PC-9 (cell line): ENCODE measurements at regions of chr2 and their contacts with region 1.

Region 1: GRCh38 chr2:220228299-220229006 is 601.0 kb downstream of the SLC4A3 start:
- DNase-seq: peak; percentile 80 to 97
- H3K4me3 ChIP-seq: peak overlapping the region; percentile 45
- H3K27ac ChIP-seq: peak overlapping the region; percentile 90
- H3K4me1 ChIP-seq: peaks cover 67% of the 10 kb centered on the region
- H3K27me3 ChIP-seq: no peaks in the 10 kb centered on the region
- CTCF ChIP-seq: no peak

Region 2: DNA sequence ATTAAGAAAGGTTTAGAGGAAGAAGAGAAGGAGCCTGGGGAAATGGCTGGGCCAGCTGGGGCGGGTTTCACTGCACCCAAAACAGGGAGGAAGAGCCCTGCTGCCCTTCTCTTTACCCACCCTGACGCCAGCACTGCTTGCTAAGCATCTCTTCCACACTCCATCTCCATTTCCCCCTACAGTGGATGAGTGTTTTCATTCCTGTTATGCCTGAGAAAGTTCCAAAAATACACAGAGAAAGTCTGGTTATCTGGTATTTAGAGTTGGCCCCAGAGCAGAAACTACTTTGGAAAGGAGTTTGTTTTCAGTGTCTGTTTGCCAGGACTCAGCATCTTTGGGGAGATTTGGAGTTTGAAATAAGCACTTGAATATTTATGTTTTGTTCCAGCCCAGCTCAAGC is 150.0 kb before region 1 on chr2:
- CTCF ChIA-PET with region 1: no interaction called
- POLR2A ChIA-PET with region 1: no interaction called
- intact Hi-C with region 1: no loop called
- DNase-seq: no peak
- H3K4me3 ChIP-seq: no peak overlapping the region
- H3K27ac ChIP-seq: no peak overlapping the region
- H3K4me1 ChIP-seq: peaks cover 15% of the 10 kb centered on the region; the same call in 1 of the 2 replicates
- H3K27me3 ChIP-seq: no peaks in the 10 kb centered on the region
- CTCF ChIP-seq: no peak

Region 3: GRCh38 chr2:220143336-220143735 is 85.1 kb before region 1 on chr2:
- CTCF ChIA-PET with region 1: no interaction called
- POLR2A ChIA-PET with region 1: no interaction called
- intact Hi-C with region 1: loop called (anchors 1 kb)
- DNase-seq: peak; percentile 39 to 77
- H3K4me3 ChIP-seq: no peak overlapping the region
- H3K27ac ChIP-seq: peak overlapping the region; percentile 58
- H3K4me1 ChIP-seq: peaks cover 16% of the 10 kb centered on the region
- H3K27me3 ChIP-seq: no peaks in the 10 kb centered on the region
- CTCF ChIP-seq: no peak

Region 4: DNA sequence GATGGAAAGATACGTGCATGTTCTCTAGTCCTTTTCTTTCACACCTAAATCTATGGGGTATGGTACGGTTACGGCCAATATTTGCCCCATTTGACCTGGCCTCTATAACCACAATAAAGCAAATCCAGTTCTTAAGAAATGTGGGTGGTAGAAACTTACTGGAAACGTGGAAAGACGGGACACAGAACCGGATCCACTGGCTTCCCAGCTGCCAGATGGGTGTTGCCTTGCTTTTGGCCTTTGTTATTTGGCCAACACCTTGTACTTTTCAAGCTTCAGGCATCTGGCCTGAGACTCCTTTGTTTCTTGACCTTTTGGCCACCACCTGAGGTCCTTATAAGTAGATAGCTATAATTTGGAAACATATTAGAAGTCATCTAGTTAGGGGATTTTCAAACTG is 34.9 kb after region 1 on chr2:
- CTCF ChIA-PET with region 1: no interaction called
- POLR2A ChIA-PET with region 1: no interaction called
- intact Hi-C with region 1: loop called (anchors 1 kb)
- DNase-seq: peak in 1 of 2 experiments; percentile 37
- H3K4me3 ChIP-seq: no peak overlapping the region
- H3K27ac ChIP-seq: no peak overlapping the region
- H3K4me1 ChIP-seq: no peaks in the 10 kb centered on the region
- H3K27me3 ChIP-seq: no peaks in the 10 kb centered on the region
- CTCF ChIP-seq: no peak

Region 5: GRCh38 chr2:220353897-220354296 is 125.4 kb after region 1 on chr2:
- CTCF ChIA-PET with region 1: interaction called, 3 read pairs
- POLR2A ChIA-PET with region 1: no interaction called
- intact Hi-C with region 1: loop called (anchors 5 kb)
- DNase-seq: no peak
- H3K4me3 ChIP-seq: no peak overlapping the region
- H3K27ac ChIP-seq: no peak overlapping the region
- H3K4me1 ChIP-seq: peaks cover 18% of the 10 kb centered on the region
- H3K27me3 ChIP-seq: no peaks in the 10 kb centered on the region
- CTCF ChIP-seq: no peak

Region 6: DNA sequence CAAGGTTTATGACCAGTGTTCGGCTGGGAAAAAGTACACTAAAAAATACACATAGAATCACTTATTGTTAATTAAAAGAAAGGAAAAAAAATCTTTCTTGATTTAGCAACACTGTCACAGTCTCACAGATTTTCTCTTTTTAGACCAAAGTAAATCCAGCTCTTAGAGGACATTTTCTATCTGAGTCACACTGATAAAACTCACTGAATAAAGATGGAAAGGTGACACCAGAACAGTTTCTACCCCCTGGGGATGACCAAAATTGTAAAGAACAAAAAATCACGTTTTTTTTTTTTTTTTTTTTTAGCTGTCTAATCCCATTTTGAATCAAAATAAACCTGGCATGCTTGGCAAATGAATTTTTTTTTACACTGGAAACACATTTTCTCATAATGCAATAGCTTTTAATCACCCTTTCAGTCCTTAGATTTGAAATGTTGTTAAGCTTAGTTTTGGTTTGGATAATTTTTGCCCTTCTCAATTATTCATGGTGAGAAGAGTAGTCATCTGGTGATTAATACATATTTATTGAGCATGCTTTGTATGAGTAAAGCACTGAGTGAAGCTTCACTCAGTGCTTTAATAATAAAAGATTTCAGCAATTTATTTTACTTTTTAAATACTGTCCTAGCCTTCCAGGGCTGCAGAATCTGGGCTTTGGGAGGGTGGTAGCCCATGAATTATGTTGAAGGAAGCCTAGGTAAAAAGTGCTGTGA is 285.3 kb after region 1 on chr2:
- CTCF ChIA-PET with region 1: no interaction called
- POLR2A ChIA-PET with region 1: interaction called, 14 read pairs
- intact Hi-C with region 1: no loop called
- DNase-seq: no peak
- H3K4me3 ChIP-seq: no peak overlapping the region
- H3K27ac ChIP-seq: no peak overlapping the region
- H3K4me1 ChIP-seq: peaks cover 21% of the 10 kb centered on the region
- H3K27me3 ChIP-seq: no peaks in the 10 kb centered on the region
- CTCF ChIP-seq: no peak

Region 7: DNA sequence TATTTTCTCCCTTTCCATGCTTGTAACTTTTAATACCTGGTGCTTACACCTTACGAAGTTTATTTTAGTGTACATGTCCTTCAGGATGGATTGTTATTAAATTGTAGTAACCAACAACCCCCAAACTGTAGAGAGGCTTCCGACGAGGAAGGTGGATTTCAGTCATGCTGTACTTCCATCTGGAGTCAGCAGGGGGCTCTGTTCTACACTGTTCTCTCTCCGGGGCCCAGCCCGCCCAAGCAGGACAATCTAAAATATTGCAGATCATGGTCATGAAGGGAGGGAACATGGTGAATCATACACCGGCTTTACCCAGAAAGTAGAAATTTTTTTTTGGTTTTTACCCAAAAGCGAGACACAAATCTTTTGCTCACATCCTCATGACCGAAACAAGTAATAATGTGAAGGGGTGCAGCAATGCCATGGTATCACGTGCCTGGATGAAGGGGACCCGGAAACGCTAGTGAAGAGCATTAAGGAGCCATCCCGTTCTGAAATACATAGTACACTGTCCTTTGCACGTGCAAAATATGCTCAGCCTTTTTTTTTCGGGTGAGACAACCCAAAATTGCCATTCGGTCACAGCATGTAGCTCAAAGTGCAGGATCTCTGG is 458.9 kb after region 1 on chr2:
- CTCF ChIA-PET with region 1: no interaction called
- POLR2A ChIA-PET with region 1: no interaction called
- intact Hi-C with region 1: loop called (anchors 2 kb)
- DNase-seq: peak in 1 of 2 experiments; percentile 47
- H3K4me3 ChIP-seq: no peak overlapping the region
- H3K27ac ChIP-seq: no peak overlapping the region
- H3K4me1 ChIP-seq: peaks cover 9% of the 10 kb centered on the region; the same call in 1 of the 2 replicates
- H3K27me3 ChIP-seq: no peaks in the 10 kb centered on the region
- CTCF ChIP-seq: peak; percentile 84

Region 8: DNA sequence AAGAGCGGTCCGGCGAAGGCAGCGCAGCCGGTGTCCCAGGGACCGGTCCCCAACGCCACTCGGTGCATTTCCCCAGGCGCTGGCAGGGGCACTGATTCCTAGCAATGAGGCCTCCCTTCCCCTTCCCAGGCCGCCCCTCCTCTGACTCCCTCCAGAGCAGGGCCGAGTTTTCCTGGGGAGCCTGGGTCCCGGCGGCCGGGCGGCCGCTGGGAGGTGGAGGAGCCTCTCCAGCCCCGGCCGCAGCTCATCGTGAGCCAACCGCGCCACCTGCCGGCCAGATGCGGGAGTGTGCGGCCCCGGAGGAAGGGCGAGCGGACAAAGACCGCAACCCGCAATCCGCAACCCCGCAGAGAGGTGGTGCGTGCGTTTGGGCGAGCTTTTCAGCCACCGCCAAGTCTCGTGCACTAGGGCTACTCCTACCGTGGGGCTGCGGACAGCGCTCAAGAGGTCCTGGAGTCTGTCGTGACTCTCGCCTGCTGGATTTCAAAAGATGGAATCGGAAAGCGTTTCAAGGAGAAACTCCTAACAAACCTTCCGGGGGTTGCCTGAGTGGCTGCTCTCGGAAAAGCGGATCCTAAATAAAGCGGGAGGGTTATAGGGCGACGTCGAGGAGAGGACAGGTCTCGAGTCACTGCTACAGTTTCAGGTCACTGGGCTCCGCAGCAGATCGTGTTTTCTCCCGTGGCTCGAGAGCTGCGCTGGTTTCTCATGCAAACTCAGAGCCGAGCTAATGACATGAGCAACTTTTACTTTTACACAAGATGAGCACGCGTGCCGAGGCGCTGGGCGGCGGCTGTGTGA is 1345.2 kb after region 1 on chr2:
- CTCF ChIA-PET with region 1: no interaction called
- POLR2A ChIA-PET with region 1: no interaction called
- intact Hi-C with region 1: loop called (anchors 1 kb)
- DNase-seq: peak; percentile 79 to 96
- H3K4me3 ChIP-seq: peak overlapping the region; percentile 87
- H3K27ac ChIP-seq: peak overlapping the region; percentile 51; the same call in 1 of the 2 replicates
- H3K4me1 ChIP-seq: peaks cover 15% of the 10 kb centered on the region
- H3K27me3 ChIP-seq: no peaks in the 10 kb centered on the region
- CTCF ChIP-seq: peak; percentile 100